ENCODE measurements at regions of chr16 and their contacts with region 1.

Region 1: GRCh38 chr16:64925166-64925565 is 196.7 kb downstream of the CDH11 start:
- DNase-seq: peak in 1 of 2 donors; percentile 46
- H3K4me3 ChIP-seq: no peak overlapping the region
- CTCF ChIP-seq: no peak
- POLR2A ChIP-seq: no peak

Region 2: GRCh38 chr16:63005356-63005755 is 1919.8 kb before region 1 on chr16:
- intact Hi-C with region 1: loop called (anchors 5 kb)
- DNase-seq: no peak
- H3K4me3 ChIP-seq: no peak overlapping the region
- CTCF ChIP-seq: no peak
- POLR2A ChIP-seq: no peak